ENCODE measurements at regions of chr17 and their contacts with region 1.

Region 1: GRCh38 chr17:81083125-81083765 is 48.3 kb downstream of the BAIAP2 start:
- DNase-seq: no peak
- H3K4me3 ChIP-seq: no peak overlapping the region
- H3K27ac ChIP-seq: peak overlapping the region; percentile 82
- H3K4me1 ChIP-seq: peaks cover 45% of the 10 kb centered on the region
- H3K27me3 ChIP-seq: no peaks in the 10 kb centered on the region
- CTCF ChIP-seq: no peak

Region 2: DNA sequence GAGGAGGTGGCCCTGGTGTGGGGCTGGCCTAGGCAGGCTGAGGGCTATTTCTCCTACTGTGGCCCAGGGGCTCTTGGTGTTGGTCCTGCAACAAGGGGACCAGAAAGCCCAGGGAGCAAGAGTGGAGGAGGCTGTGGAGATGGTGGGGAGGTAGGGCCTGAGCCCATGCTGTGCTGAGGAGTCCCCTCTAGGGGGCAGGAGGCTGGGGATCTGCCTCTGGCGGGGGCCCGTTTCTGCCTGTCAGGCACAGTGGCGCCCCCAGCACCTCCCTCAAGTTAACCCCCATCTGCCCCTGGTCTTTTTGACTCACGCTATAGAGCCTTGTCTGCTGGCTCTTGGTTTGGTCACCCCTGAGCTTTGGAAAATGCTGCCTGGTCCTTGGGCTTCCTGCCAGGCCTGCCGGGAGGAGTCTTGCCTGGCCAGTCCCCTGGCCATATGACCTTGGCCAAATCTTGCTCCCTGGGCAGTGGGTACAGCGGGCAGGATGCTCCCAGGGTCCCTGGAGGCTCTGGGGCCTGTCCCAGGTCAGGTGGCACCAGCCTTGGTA is 42.4 kb before region 1 on chr17:
- CTCF ChIA-PET with region 1: no interaction called
- dilution Hi-C with region 1: loop called (anchors 5 kb)
- in situ Hi-C with region 1: loop called in 1 of 2 experiments (anchors 5 kb)
- intact Hi-C with region 1: loop called (anchors 2 kb)
- DNase-seq: no peak
- H3K4me3 ChIP-seq: peak overlapping the region in 1 of 3 experiments; percentile 10
- H3K27ac ChIP-seq: peak overlapping the region; percentile 52
- H3K4me1 ChIP-seq: peaks cover 98% of the 10 kb centered on the region
- H3K27me3 ChIP-seq: no peaks in the 10 kb centered on the region
- CTCF ChIP-seq: peak; percentile 34 to 52

Region 3: DNA sequence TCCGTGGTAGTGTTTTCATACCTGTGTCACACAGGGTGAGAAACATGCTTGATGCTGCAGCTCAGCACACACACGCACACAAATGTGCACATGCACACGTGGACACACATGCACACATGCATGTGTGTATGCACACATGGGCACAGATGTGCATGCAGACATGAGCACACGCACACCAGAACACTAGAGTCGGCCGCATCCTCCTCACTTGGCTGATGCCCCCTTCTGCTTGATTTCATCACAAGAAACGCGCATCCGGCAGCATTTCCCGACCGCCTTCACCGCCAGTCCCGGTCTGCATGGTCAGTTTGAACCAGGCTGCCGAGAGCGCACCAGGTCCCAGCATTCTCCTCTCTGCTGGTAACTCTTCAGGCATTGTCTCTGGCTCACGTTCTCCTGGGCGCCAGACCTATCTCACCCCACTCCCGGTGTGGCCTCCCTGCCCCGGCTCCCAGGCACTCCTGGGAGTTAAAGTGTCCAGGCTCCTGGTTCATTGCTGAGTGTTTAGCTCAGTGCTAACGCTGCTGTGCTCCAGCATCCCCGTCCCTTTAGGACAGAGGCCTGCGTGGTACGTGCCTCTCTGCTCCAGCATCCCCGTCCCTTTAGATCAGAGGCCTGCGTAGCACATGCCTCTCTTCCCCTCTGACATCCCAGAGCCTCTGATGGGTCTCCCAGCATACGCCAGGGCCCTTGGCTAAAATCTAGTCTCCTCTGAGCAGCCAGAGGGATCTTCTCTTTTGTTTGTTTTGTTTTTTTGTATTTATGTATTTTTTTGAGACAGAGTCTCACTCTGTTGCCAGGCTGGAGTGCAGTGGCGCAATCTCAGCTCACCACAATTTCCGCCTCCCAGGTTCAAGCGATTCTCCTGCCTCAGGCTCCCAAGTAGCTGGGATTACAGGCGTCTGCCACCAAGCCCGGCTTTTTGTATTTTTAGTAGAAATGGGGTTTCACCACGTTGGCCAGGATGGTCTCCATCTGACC is 32.3 kb before region 1 on chr17:
- CTCF ChIA-PET with region 1: no interaction called
- dilution Hi-C with region 1: no loop called
- in situ Hi-C with region 1: no loop called
- intact Hi-C with region 1: no loop called
- DNase-seq: no peak
- H3K4me3 ChIP-seq: no peak overlapping the region
- H3K27ac ChIP-seq: peak overlapping the region; percentile 91
- H3K4me1 ChIP-seq: peaks cover 48% of the 10 kb centered on the region
- H3K27me3 ChIP-seq: no peaks in the 10 kb centered on the region
- CTCF ChIP-seq: no peak

Region 4: GRCh38 chr17:81064678-81065475 is 18.4 kb before region 1 on chr17:
- CTCF ChIA-PET with region 1: no interaction called
- dilution Hi-C with region 1: no loop called
- in situ Hi-C with region 1: no loop called
- intact Hi-C with region 1: loop called (anchors 1 kb)
- DNase-seq: no peak
- H3K4me3 ChIP-seq: no peak overlapping the region
- H3K27ac ChIP-seq: peak overlapping the region; percentile 56
- H3K4me1 ChIP-seq: peaks cover 44% of the 10 kb centered on the region
- H3K27me3 ChIP-seq: no peaks in the 10 kb centered on the region
- CTCF ChIP-seq: no peak

Region 5: GRCh38 chr17:81253358-81254131 is 170.3 kb after region 1 on chr17:
- CTCF ChIA-PET with region 1: no interaction called
- dilution Hi-C with region 1: no loop called
- in situ Hi-C with region 1: no loop called
- intact Hi-C with region 1: no loop called
- DNase-seq: no peak
- H3K4me3 ChIP-seq: no peak overlapping the region
- H3K27ac ChIP-seq: no peak overlapping the region
- H3K4me1 ChIP-seq: no peaks in the 10 kb centered on the region
- H3K27me3 ChIP-seq: no peaks in the 10 kb centered on the region
- CTCF ChIP-seq: peak; percentile 61 to 66